Right ventricle myocardium inferior (tissue), 1 donor: ENCODE measurements at regions of chr2 and their contacts with region 1.

Region 1: DNA sequence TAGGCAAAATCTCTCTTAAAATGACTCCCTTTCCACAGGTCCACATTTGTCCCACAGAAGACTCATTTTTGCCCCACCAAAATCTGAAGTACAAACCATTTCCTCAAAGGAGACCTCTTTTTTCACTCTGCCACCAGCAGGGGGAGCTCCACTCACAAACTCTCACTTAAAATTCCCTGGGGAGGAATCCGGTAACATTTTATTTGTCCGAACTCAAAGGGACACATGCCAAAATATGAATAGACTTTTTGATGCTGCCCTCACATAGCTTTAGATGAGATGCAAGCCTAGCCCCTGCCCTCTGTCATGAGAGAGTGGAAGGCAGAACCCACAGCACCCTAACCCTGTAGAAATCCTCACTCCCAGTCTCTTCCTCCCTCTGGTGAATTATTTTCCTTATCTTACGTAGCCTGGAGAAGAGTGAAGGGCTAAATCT is 57.1 kb downstream of the RMDN2 start:
- DNase-seq: no peak
- ATAC-seq: peak; percentile 39

Region 2: DNA sequence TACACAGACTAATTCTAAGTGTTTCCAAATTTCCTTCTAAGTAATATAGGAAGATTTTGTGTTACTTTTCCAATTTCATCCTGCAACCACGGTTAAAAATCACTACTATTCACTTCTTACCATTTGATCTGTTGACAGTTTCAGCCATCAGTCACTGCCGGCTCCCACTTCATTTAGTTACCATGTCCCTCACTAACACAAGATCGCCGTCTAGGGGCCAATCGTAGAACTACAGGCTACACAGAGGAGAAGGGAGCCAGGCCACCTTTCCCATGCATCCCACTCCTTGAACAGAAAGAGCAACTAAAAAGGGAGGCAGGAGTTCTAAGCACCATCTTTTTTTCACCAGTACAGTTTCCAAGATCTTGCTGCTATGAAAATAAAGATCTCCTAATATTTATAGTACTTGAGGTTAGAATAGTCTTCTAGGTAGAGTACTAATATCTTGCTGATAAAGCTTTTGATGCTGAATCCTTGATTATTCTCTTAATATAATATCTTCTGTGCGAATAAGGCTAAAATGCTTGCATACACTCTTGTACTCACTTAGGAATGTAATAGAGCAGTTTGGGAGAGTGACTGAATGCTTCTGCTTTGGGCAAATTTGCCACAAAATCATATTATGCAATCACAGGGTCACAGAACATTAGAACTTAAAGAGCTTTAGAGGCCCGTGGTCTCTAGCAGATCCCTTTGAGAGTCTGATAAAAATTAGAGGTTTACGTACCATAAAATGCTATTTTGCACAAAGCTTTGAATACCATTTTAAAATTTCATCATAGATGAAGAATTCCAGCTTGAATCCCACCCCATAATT is 133.3 kb after region 1 on chr2:
- intact Hi-C with region 1: loop called (anchors 2 kb)
- DNase-seq: peak; percentile 81
- ATAC-seq: peak; percentile 66